Caco-2 (cell line): ENCODE measurements at regions of chr11 and their contacts with region 1.

Region 1: GRCh38 chr11:90947930-90948329 is 725.1 kb upstream of the CHORDC1 start:
- DNase-seq: no peak
- H3K4me3 ChIP-seq: no peak overlapping the region
- H3K4me3 Mint-ChIP-seq: no peak overlapping the region
- H3K27ac Mint-ChIP-seq: no peak overlapping the region
- H3K4me1 ChIP-seq: no peaks in the 10 kb centered on the region
- H3K4me1 Mint-ChIP-seq: peaks cover 7% of the 10 kb centered on the region
- H3K27me3 ChIP-seq: no peaks in the 10 kb centered on the region
- H3K27me3 Mint-ChIP-seq: peaks cover 2% of the 10 kb centered on the region
- CTCF ChIP-seq: no peak

Region 2: GRCh38 chr11:90646706-90647105 is 301.2 kb before region 1 on chr11:
- CTCF ChIA-PET with region 1: no interaction called
- POLR2A ChIA-PET with region 1: no interaction called
- intact Hi-C with region 1: loop called (anchors 10 kb)
- DNase-seq: no peak
- H3K4me3 ChIP-seq: no peak overlapping the region
- H3K4me3 Mint-ChIP-seq: no peak overlapping the region
- H3K27ac Mint-ChIP-seq: no peak overlapping the region
- H3K4me1 ChIP-seq: no peaks in the 10 kb centered on the region
- H3K4me1 Mint-ChIP-seq: no peaks in the 10 kb centered on the region
- H3K27me3 ChIP-seq: no peaks in the 10 kb centered on the region
- H3K27me3 Mint-ChIP-seq: peaks cover 3% of the 10 kb centered on the region
- CTCF ChIP-seq: no peak

Region 3: DNA sequence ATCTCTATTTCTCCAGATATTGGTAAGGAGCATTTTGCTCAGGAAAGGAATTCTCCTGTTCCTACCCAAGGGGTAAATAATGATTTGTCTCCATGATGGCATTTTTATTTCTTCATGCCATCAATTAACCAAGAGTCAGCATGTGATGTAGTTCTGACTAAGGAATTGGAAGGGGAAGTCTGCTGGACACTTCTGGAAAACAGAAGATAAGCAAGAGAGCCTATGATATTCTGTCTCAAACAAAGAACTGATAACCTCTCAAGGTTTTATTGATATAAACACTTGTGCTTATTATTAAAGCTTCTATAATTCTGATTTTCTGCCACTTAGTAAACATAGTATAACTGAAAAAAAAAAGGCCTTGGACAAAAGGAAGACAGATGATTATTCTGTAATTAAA is 52.1 kb before region 1 on chr11:
- CTCF ChIA-PET with region 1: no interaction called
- POLR2A ChIA-PET with region 1: no interaction called
- intact Hi-C with region 1: no loop called
- DNase-seq: no peak
- H3K4me3 ChIP-seq: no peak overlapping the region
- H3K4me3 Mint-ChIP-seq: no peak overlapping the region
- H3K27ac Mint-ChIP-seq: no peak overlapping the region
- H3K4me1 ChIP-seq: no peaks in the 10 kb centered on the region
- H3K4me1 Mint-ChIP-seq: no peaks in the 10 kb centered on the region
- H3K27me3 ChIP-seq: no peaks in the 10 kb centered on the region
- H3K27me3 Mint-ChIP-seq: peaks cover 3% of the 10 kb centered on the region
- CTCF ChIP-seq: no peak

Region 4: GRCh38 chr11:91047882-91048281 is 100.0 kb after region 1 on chr11:
- CTCF ChIA-PET with region 1: no interaction called
- POLR2A ChIA-PET with region 1: no interaction called
- intact Hi-C with region 1: no loop called
- DNase-seq: no peak
- H3K4me3 ChIP-seq: no peak overlapping the region
- H3K4me3 Mint-ChIP-seq: no peak overlapping the region
- H3K27ac Mint-ChIP-seq: no peak overlapping the region
- H3K4me1 ChIP-seq: no peaks in the 10 kb centered on the region
- H3K4me1 Mint-ChIP-seq: no peaks in the 10 kb centered on the region
- H3K27me3 ChIP-seq: no peaks in the 10 kb centered on the region
- H3K27me3 Mint-ChIP-seq: no peaks in the 10 kb centered on the region
- CTCF ChIP-seq: peak in 1 of 2 experiments; percentile 4